ENCODE measurements at regions of chr17 and their contacts with region 1.

Region 1: DNA sequence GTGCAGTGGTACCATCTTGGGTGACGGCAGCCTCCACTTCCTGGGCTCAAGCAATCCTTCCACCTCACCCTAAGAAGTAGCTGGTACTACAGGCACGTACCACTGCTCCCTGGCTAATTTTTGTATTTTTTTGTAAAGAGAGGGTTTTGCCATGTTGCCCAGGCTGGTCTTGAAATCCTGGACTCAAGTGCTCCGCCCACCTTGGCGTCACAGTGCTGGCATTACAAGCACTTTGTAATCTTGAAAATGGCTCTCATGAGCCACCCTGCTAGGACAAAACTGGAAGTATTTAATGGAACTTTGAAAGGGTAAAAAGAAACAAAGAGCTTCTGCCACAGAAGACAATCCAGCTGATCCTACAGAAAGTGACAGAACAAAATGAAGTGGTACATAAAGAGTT is 9.2 kb downstream of the SUMO2 start:
- DNase-seq: no peak
- H3K4me3 ChIP-seq: no peak overlapping the region
- H3K27ac ChIP-seq: no peak overlapping the region
- H3K4me1 ChIP-seq: no peaks in the 10 kb centered on the region
- H3K27me3 ChIP-seq: no peaks in the 10 kb centered on the region
- CTCF ChIP-seq: no peak
- POLR2A ChIP-seq: no peak

Region 2: GRCh38 chr17:75124041-75124818 is 49.3 kb before region 1 on chr17:
- intact Hi-C with region 1: loop called in 1 of 2 experiments (anchors 10 kb)
- DNase-seq: peak; percentile 80 to 94 (median 92)
- H3K4me3 ChIP-seq: no peak overlapping the region
- H3K27ac ChIP-seq: peak overlapping the region in 3 of 5 donors; percentile 37 to 80 (median 56)
- H3K4me1 ChIP-seq: peaks cover 10 to 11% of the 10 kb centered on the region in 2 donors
- H3K27me3 ChIP-seq: no peaks in the 10 kb centered on the region
- CTCF ChIP-seq: no peak
- POLR2A ChIP-seq: peak in 1 of 2 donors; percentile 38

Region 3: DNA sequence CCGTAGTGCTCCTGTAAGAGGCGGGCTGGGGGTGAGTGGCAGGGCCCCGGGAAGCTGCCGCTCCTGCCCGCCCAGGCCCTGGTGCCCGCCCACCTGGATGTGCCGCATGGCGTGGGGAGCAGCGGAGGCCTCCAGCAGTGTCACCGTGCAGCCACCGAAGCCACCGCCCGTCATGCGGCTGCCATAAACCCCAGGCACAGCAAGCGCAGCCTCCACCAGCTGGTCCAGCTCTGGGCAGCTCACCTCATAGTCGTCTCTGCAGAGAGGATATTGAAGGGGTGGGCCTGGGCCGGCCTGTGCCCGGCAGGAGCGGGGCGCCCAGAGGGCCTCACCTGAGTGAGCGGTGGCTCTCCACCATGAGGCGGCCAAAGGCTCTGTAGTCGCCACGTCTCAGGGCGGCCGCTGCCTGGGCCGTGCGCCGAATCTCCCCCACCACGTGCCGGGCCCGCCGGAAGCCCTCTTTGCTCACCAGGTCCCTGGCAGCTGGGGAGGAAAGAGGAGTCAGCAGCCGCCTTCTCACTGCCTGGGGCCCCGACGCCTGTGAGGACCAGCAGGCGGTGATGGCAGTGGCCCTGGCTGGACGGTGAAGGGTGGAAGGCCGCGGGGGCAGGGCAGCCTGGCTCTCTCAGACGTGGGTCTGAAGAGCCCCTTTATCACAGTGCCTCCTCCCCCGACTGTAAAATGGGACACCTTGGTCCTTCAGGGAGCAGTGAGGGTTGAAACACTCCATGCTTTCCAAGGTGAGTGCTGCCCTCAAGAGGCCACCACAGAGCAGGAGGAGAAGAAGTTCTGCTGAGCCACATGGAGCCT is 584.8 kb after region 1 on chr17:
- intact Hi-C with region 1: no loop called
- DNase-seq: no peak
- H3K4me3 ChIP-seq: no peak overlapping the region
- H3K27ac ChIP-seq: no peak overlapping the region
- H3K4me1 ChIP-seq: peaks cover 10% of the 10 kb centered on the region in 2 donors
- H3K27me3 ChIP-seq: no peaks in the 10 kb centered on the region
- CTCF ChIP-seq: no peak
- POLR2A ChIP-seq: no peak

Measured in adrenal gland (tissue), 19 donors.